ENCODE measurements at regions of chr12 and their contacts with region 1.

Region 1: DNA sequence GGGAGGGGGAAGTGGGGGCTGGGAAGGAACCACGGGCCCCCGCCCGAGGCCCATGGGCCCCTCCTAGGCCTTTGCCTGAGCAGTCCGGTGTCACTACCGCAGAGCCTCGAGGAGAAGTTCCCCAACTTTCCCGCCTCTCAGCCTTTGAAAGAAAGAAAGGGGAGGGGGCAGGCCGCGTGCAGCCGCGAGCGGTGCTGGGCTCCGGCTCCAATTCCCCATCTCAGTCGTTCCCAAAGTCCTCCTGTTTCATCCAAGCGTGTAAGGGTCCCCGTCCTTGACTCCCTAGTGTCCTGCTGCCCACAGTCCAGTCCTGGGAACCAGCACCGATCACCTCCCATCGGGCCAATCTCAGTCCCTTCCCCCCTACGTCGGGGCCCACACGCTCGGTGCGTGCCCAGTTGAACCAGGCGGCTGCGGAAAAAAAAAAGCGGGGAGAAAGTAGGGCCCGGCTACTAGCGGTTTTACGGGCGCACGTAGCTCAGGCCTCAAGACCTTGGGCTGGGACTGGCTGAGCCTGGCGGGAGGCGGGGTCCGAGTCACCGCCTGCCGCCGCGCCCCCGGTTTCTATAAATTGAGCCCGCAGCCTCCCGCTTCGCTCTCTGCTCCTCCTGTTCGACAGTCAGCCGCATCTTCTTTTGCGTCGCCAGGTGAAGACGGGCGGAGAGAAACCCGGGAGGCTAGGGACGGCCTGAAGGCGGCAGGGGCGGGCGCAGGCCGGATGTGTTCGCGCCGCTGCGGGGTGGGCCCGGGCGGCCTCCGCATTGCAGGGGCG is at the start of gene GAPDH:
- DNase-seq: peak; percentile 95
- H3K4me3 ChIP-seq: peak within 1 kb of the TSS; percentile 68 to 70 (median 68)
- H3K27ac ChIP-seq: peak within 1 kb of the TSS; percentile 73
- H3K4me1 ChIP-seq: peaks cover 34% of the 10 kb centered on the region
- H3K27me3 ChIP-seq: no peaks in the 10 kb centered on the region
- CTCF ChIP-seq: no peak
- POLR2A ChIP-seq: peak; percentile 99
- total RNA-seq, gene GAPDH: 4,245 and 4,648 TPM in 2 replicates

Region 2: GRCh38 chr12:5923751-5924150 is 610.4 kb before region 1 on chr12:
- CTCF ChIA-PET with region 1: no interaction called
- POLR2A ChIA-PET with region 1: no interaction called
- dilution Hi-C with region 1: no loop called
- intact Hi-C with region 1: no loop called
- DNase-seq: no peak
- H3K4me3 ChIP-seq: no peak overlapping the region
- H3K27ac ChIP-seq: no peak overlapping the region
- H3K4me1 ChIP-seq: no peaks in the 10 kb centered on the region
- H3K27me3 ChIP-seq: no peaks in the 10 kb centered on the region
- CTCF ChIP-seq: no peak
- POLR2A ChIP-seq: no peak

Region 3: DNA sequence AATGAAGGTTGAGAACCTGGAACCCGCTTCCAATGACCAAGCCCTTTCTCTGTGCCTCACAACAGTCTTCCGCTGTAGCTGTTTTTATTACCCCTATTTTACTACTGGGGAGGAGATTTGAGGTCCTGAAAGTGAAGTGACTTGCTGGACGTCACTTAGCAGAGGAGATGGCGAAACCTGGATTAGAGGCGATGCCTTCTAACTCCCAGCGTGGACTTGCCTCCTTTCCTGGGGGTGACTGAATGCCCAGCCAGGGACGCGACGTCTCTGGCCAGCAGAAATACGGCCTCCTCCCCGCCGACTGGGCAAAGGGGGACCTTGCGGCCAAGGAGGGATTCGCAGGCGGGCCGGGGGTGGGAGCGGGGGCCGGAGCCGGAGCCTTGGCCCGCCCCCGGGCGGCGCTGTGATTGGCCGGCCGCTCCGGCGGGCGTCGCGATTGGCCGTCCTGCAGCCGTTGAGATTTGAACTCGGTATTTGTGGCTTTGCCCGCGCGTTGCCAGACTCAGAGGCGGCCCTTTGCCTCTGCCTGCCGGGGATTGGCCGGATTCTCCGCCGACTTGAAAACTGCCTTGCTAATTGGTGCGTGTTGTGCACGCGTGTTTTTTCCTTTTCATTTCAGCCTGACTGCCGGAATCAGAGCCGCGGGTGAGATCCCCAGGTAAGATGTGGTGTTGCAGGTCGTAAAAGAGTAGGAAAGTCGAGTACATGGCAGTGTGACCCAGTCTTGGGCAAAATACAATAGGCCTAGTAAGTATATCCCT is 40.4 kb before region 1 on chr12 and contains the start of gene NCAPD2:
- CTCF ChIA-PET with region 1: interaction called, 14 read pairs
- POLR2A ChIA-PET with region 1: interaction called, 9 read pairs
- dilution Hi-C with region 1: no loop called
- intact Hi-C with region 1: loop called (anchors 1 kb)
- DNase-seq: peak; percentile 98
- H3K4me3 ChIP-seq: peak within 1 kb of the TSS; percentile 82 to 92 (median 86)
- H3K27ac ChIP-seq: peak within 1 kb of the TSS; percentile 95
- H3K4me1 ChIP-seq: peaks cover 20% of the 10 kb centered on the region
- H3K27me3 ChIP-seq: no peaks in the 10 kb centered on the region
- CTCF ChIP-seq: peak; percentile 21 to 35
- POLR2A ChIP-seq: no peak
- total RNA-seq, gene NCAPD2: 77.3 and 90.1 TPM in 2 replicates

Region 4: DNA sequence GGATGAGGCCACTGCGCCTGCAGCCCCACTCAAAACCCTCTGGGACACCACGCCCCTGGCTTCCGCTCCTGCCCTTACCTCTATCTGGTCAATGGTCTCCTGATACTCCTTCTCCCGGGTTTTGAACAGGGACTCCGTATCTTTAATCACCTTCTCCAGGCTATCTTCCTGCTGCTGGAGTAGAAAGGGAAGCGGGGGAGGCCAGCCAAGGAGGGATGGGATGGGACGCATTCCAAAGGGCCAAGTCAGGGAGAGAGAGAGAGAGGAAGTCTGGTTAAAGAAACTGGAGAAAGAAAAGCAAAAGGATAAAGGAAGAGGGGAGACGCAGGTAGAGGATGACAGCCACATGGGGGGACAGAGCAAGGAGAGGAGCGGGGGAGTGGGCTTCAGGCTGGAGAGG is 13.9 kb after region 1 on chr12:
- CTCF ChIA-PET with region 1: interaction called, 145 read pairs
- POLR2A ChIA-PET with region 1: interaction called, 14 read pairs
- dilution Hi-C with region 1: no loop called
- intact Hi-C with region 1: no loop called
- DNase-seq: peak; percentile 76
- H3K4me3 ChIP-seq: no peak overlapping the region
- H3K27ac ChIP-seq: peak overlapping the region; percentile 26
- H3K4me1 ChIP-seq: peaks cover 42% of the 10 kb centered on the region
- H3K27me3 ChIP-seq: no peaks in the 10 kb centered on the region
- CTCF ChIP-seq: no peak
- POLR2A ChIP-seq: no peak

Region 5: DNA sequence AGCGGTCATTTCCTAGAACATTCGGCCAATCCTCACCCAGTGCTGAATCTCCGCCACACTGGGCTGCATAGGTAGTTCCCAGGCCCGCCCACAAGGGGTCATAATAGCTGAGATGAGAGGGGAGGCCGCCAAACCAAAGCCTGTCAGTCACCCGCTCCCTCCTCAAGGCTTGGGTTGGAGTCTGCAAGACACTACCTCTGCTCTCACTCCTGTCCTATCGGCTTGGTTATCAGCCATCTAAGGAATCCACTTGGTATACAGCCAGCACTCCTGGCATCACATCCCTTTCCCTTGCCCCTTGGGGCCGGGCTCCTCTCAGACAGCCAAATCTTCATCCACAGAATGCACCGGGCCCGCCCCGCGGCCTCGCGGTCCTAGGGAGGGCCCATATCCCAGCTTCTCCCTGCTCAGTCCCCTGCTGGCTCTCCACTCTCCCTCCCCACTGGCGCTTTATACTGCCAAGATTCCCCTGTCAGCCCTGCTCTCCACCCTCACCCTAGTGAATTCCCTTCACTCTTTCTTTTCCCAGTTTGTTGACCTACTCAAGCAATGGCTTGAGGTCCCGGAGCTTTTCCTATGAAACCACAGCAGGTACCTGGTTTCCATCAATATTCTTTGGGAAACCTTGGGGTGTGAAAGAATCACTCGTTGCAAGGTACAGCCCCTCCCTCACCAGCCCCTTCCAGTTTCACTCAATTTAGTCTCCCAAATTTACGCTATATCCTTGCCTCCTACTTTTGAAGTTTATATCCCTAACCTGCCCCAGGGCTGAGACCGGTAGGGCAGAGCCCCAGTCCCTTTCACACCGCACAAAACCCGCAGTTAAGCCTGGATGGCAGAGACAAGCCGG is 20.3 kb after region 1 on chr12:
- CTCF ChIA-PET with region 1: interaction called, 145 read pairs
- POLR2A ChIA-PET with region 1: interaction called, 14 read pairs
- dilution Hi-C with region 1: no loop called
- intact Hi-C with region 1: loop called (anchors 2 kb)
- DNase-seq: peak; percentile 80
- H3K4me3 ChIP-seq: peak overlapping the region; percentile 67 to 86 (median 67)
- H3K27ac ChIP-seq: peak overlapping the region; percentile 15
- H3K4me1 ChIP-seq: peaks cover 44% of the 10 kb centered on the region
- H3K27me3 ChIP-seq: no peaks in the 10 kb centered on the region
- CTCF ChIP-seq: peak; percentile 57 to 84
- POLR2A ChIP-seq: no peak

Region 6: DNA sequence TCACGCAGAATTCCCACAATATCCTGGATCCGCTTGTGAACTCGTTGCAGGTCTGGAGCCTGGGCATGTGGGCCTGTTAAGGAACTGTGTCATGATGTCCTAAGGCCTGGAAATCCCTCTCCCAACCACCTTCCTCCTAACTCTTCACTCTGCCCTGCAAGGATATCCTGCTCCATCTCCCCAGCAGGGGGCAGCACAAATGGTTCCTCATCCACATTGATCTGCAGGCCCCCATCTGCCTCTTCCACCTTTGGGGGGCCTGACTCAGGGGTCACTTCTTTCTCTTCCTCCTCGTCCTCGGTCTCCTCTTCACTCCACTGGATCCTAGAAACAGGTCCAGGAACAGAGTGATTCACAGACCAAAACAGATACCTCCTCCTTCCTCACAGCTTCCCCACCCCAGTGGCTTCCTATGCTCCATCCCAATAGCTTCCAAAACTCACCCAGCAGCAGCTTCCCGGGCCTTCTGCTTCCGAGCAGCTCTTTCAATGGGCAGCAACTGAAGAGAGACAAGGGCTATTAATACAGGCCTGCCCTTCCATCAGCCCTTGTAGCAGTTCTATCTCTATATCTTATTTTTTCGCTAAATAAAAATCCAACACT is 29.4 kb after region 1 on chr12:
- CTCF ChIA-PET with region 1: interaction called, 11 read pairs
- POLR2A ChIA-PET with region 1: interaction called, 4 read pairs
- dilution Hi-C with region 1: no loop called
- intact Hi-C with region 1: no loop called
- DNase-seq: peak; percentile 44
- H3K4me3 ChIP-seq: no peak overlapping the region
- H3K27ac ChIP-seq: no peak overlapping the region
- H3K4me1 ChIP-seq: peaks cover 7% of the 10 kb centered on the region
- H3K27me3 ChIP-seq: no peaks in the 10 kb centered on the region
- CTCF ChIP-seq: peak; percentile 79 to 80
- POLR2A ChIP-seq: no peak